ENCODE measurements at regions of chr5 and their contacts with region 1.

Region 1: DNA sequence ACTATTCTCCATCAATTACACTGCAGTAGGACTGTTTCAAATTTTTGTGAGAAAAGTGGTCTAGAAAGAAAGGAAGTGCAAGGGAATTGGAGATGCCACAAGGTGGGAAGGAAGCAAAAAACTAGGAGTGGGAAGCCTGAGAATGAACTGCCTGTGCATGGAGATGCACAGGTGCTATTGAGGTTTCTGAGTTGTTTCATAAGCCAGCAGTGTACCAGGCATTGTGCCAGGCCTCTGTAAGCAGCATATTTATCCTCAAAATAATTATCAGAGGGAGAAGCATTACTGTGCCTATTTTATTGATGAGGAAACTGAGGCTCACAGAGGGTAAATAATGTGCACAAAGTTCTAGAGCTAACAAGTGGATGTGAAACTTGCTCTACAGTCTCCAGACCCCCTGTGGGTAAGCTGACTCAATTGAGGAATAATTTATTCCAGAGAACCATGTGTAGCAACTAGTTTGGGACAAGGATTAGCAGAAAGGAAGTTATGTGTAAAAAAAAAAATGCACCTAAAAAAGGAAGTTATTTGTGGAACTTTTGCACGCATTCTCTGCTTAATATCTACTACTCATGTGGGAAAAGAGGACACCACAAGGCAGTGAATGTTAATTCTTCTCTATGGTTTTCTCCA is 96.7 kb downstream of the SNCAIP start:
- DNase-seq: no peak
- ATAC-seq: no peak
- H3K4me3 ChIP-seq: no peak overlapping the region
- H3K27ac ChIP-seq: no peak overlapping the region
- H3K4me1 ChIP-seq: peaks cover 0 to 1% (median 0%) of the 10 kb centered on the region in 12 donors
- H3K27me3 ChIP-seq: no peaks in the 10 kb centered on the region
- CTCF ChIP-seq: no peak
- POLR2A ChIP-seq: no peak

Region 2: GRCh38 chr5:121805911-121806310 is 602.8 kb before region 1 on chr5:
- intact Hi-C with region 1: no loop called
- DNase-seq: no peak
- ATAC-seq: no peak
- H3K4me3 ChIP-seq: no peak overlapping the region
- H3K27ac ChIP-seq: no peak overlapping the region
- H3K4me1 ChIP-seq: no peaks in the 10 kb centered on the region
- H3K27me3 ChIP-seq: no peaks in the 10 kb centered on the region
- CTCF ChIP-seq: no peak
- POLR2A ChIP-seq: no peak

Region 3: GRCh38 chr5:122322801-122323548 is 85.7 kb before region 1 on chr5:
- intact Hi-C with region 1: loop called in 1 of 10 experiments (anchors 10 kb)
- DNase-seq: no peak
- ATAC-seq: peak; percentile 41 to 62 (median 46)
- H3K4me3 ChIP-seq: no peak overlapping the region
- H3K27ac ChIP-seq: no peak overlapping the region
- H3K4me1 ChIP-seq: peaks cover 0 to 10% (median 0%) of the 10 kb centered on the region in 12 donors
- H3K27me3 ChIP-seq: peaks cover 0 to 5% (median 0%) of the 10 kb centered on the region in 9 donors
- CTCF ChIP-seq: no peak
- POLR2A ChIP-seq: no peak

Region 4: GRCh38 chr5:122390154-122390553 is 18.6 kb before region 1 on chr5:
- intact Hi-C with region 1: loop called in 1 of 10 experiments (anchors 2 kb)
- DNase-seq: no peak
- ATAC-seq: no peak
- H3K4me3 ChIP-seq: no peak overlapping the region
- H3K27ac ChIP-seq: no peak overlapping the region
- H3K4me1 ChIP-seq: peaks cover 0 to 8% (median 0%) of the 10 kb centered on the region in 12 donors
- H3K27me3 ChIP-seq: no peaks in the 10 kb centered on the region
- CTCF ChIP-seq: no peak
- POLR2A ChIP-seq: no peak